Activated naive CD8-positive, alpha-beta T cell treated with anti-CD3 and anti-CD28 coated beads, Interleukin-2, amount 10 ng/mL, durations not matched to agents 7 days and 5 days (primary cell): ENCODE measurements at regions of chr2 and their contacts with region 1.

Region 1: DNA sequence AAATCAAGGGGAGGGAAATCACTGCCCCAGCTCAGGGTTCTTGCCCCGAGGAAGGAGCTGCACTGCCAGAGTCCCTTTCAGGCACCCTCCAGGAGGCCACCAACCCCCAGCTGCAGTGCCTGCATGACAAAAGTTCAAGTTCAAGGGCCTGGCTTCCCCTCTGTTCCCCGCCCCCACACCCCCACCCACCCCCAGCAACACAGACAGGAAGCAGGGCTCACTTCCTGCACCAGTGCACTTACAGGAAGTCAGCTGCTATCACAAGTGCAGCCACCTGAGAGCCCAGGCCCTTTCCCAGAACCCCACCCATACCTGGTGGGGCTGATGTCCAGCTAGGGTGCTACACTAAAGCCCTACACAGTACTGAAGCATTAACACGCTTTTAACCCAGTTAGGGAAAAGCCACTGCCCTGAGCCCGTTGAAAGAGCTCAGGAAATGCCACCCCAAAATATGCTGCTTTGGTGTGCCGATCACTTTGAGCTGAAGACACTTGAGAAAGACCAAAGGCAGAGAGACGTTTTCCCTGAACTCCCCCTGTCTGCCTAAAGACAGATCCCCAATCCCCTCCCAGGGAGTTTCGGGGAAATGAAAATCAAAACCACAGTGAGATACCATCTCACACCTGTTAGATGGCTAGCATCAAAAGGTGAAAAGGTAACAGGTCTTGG is 109.9 kb upstream of the CAB39 start:
- DNase-seq: peak; percentile 62
- ATAC-seq: peak; percentile 95
- H3K4me3 Mint-ChIP-seq: peak overlapping the region; percentile 70
- H3K27ac Mint-ChIP-seq: peak overlapping the region; percentile 95
- H3K4me1 Mint-ChIP-seq: peaks cover 38% of the 10 kb centered on the region
- H3K27me3 Mint-ChIP-seq: no peaks in the 10 kb centered on the region

Region 2: DNA sequence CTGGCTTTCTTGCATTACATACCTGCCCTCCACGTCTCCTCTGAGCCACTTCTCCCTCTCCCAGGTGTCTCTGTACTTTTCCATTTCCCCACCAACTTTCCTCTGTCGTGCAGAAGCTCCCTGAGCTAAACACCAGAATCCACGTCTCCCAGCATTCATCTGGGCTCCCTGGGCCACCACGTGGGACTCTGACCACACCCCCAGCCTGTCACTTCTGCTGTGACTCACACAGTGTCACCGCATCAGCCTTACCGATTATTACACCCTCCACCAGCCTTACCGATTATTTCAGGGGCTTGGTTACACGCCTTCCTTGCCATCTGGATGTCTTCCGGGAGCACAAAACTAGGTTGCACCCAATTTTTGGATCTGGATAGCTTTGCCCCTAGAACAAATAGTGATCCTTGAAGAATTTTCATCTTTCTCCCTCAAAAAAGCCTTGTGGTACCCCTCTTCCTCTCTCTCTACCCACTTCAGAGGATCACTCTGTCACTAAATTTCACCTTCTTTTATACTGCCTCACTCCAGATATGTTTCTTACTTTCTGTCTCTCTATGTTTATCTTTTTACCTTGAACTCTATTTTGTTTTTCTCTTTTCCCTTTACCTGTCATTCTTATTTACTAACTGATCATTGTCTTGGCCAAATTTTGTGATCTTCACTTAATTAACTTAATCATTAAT is 26.9 kb before region 1 on chr2:
- POLR2A ChIA-PET with region 1: interaction called, 15 read pairs
- DNase-seq: peak; percentile 72
- ATAC-seq: peak; percentile 100
- H3K4me3 Mint-ChIP-seq: peak overlapping the region; percentile 76
- H3K27ac Mint-ChIP-seq: peak overlapping the region; percentile 86
- H3K4me1 Mint-ChIP-seq: peaks cover 13% of the 10 kb centered on the region
- H3K27me3 Mint-ChIP-seq: no peaks in the 10 kb centered on the region